CD8-positive, alpha-beta T cell (primary cell): ENCODE measurements at regions of chr7 and their contacts with region 1.

Region 1: DNA sequence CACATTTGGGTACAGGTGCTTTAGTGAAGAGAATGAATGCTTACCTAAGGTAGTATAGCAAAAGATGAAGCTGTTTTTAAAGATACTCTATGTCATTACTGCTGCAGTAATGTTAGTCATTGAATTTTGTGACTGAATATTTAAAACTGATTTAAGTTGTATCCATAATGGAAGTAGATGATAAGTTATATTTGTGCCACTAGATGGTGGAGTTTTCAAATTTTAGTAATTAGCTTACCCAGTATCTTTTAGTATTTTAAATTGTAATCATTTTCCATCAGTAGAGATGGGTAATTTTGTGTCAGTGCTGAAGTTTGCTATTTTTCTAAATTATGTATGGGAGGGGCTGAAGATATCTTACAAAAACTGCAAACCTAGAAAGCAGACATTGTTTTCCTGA is 25.2 kb downstream of the HBP1 start:
- DNase-seq: no peak
- ATAC-seq: no peak
- H3K4me3 ChIP-seq: no peak overlapping the region
- H3K4me3 Mint-ChIP-seq: no peak overlapping the region
- H3K27ac ChIP-seq: no peak overlapping the region
- H3K27ac Mint-ChIP-seq: peak overlapping the region; percentile 33
- H3K4me1 ChIP-seq: no peaks in the 10 kb centered on the region
- H3K4me1 Mint-ChIP-seq: peaks cover 6% of the 10 kb centered on the region
- H3K27me3 ChIP-seq: no peaks in the 10 kb centered on the region
- H3K27me3 Mint-ChIP-seq: no peaks in the 10 kb centered on the region
- CTCF ChIP-seq: no peak

Region 2: GRCh38 chr7:107173691-107174406 is 20.2 kb before region 1 on chr7:
- CTCF ChIA-PET with region 1: interaction called, 4 read pairs
- POLR2A ChIA-PET with region 1: interaction called, 17 read pairs
- intact Hi-C with region 1: loop called in 1 of 2 experiments (anchors 2 kb)
- DNase-seq: no peak
- ATAC-seq: no peak
- H3K4me3 ChIP-seq: no peak overlapping the region
- H3K4me3 Mint-ChIP-seq: peak overlapping the region; percentile 38
- H3K27ac ChIP-seq: no peak overlapping the region
- H3K27ac Mint-ChIP-seq: peak overlapping the region; percentile 42
- H3K4me1 ChIP-seq: peaks cover 66% of the 10 kb centered on the region
- H3K4me1 Mint-ChIP-seq: peaks cover 68% of the 10 kb centered on the region
- H3K27me3 ChIP-seq: no peaks in the 10 kb centered on the region
- H3K27me3 Mint-ChIP-seq: no peaks in the 10 kb centered on the region
- CTCF ChIP-seq: no peak

Region 3: DNA sequence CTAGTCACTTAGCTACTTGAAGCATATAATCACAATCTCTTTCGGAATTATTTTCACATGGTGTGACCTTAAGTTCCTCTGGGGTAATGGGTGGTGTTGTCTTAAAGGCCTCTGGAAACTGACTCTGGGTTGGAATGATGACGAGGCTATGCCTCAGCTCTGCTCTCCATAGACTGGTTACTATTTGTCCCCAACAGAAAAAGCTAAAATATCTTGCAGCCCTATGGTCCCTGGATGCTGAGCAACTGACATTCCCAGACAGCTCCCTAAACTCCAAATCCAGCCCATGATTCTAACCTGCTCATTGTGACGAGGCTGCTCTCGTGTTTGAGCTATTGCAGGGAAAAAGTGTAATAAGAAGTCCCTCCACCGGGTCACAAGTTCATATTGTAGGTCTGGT is 26.3 kb after region 1 on chr7:
- CTCF ChIA-PET with region 1: no interaction called
- POLR2A ChIA-PET with region 1: no interaction called
- intact Hi-C with region 1: no loop called
- DNase-seq: no peak
- ATAC-seq: no peak
- H3K4me3 ChIP-seq: no peak overlapping the region
- H3K4me3 Mint-ChIP-seq: no peak overlapping the region
- H3K27ac ChIP-seq: no peak overlapping the region
- H3K27ac Mint-ChIP-seq: no peak overlapping the region
- H3K4me1 ChIP-seq: no peaks in the 10 kb centered on the region
- H3K4me1 Mint-ChIP-seq: no peaks in the 10 kb centered on the region
- H3K27me3 ChIP-seq: no peaks in the 10 kb centered on the region
- H3K27me3 Mint-ChIP-seq: no peaks in the 10 kb centered on the region
- CTCF ChIP-seq: no peak